ENCODE measurements at regions of chr18 and their contacts with region 1.

Region 1: DNA sequence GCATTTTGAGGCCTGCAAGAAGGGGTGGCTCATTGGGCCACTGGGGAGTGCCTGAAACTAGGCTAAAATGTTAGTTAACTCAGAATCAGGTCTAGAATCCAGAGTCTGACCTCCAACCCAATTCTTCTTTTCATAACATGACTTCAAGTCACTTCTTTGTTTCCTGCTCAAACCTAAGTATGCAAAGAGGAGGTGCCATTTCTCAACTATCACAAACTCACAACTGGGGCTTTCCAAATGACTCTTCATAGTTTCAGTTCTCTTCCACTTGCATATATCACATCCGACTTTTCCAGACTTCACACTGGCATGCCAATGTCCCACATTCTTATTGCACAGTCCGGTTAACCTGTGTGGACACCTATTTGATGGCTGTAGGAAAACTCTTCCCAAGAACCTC is 211.6 kb downstream of the TCF4 start:
- DNase-seq: no peak
- H3K4me3 ChIP-seq: no peak overlapping the region
- H3K27ac ChIP-seq: no peak overlapping the region
- H3K4me1 ChIP-seq: no peaks in the 10 kb centered on the region
- H3K27me3 ChIP-seq: no peaks in the 10 kb centered on the region
- CTCF ChIP-seq: no peak
- POLR2A ChIP-seq: no peak

Region 2: DNA sequence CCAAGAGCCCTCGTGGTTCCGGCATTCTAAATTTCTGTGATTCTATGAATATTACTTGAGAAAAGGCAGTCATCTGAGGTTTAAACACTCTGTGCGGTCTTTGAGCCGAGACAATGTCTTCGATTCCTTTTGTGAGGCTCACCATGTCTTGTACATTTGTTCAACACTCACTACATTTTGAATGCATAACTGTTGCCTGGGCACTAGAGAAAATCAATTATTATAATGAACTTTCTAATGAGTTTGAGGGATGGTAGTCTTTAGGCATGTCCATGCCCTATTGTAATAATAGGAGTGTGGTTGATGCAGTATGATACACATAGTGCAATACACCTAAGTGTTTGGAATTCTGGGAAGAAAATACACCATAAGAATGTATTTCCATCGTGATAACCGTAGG is 1855.3 kb before region 1 on chr18:
- intact Hi-C with region 1: no loop called
- DNase-seq: no peak
- H3K4me3 ChIP-seq: no peak overlapping the region
- H3K27ac ChIP-seq: no peak overlapping the region
- H3K4me1 ChIP-seq: no peaks in the 10 kb centered on the region
- H3K27me3 ChIP-seq: no peaks in the 10 kb centered on the region
- CTCF ChIP-seq: no peak
- POLR2A ChIP-seq: no peak

Region 3: DNA sequence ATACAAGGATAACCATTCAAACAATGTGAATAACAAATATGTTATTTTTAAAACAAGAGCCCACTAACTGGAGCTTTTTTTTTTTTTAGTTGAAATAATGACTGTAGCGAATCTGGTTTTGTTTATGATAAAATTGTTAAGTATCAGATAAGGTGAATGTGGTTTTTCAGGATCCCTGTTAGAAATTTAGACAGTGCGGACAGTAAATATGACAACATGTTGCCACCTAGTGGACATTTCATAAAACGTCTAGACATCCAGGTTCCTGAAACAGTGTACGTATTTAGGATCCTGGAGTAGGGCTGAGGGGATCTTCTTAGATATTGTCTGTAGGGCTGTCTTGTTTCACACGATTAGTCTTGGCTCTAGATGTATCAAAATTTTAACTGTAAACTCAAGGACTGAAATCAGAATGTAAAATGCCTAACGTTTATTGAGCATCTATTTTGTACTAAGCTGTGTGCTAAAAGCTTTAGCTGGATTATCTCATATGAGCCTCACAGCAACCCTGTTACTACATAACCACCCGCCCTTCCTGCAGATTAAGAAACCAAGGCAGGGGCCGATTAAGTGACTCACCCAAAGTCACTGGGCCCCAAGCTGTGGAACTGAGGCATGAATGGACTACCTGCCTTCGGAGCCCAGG is 393.2 kb before region 1 on chr18:
- intact Hi-C with region 1: no loop called
- DNase-seq: no peak
- H3K4me3 ChIP-seq: no peak overlapping the region
- H3K27ac ChIP-seq: no peak overlapping the region
- H3K4me1 ChIP-seq: no peaks in the 10 kb centered on the region
- H3K27me3 ChIP-seq: no peaks in the 10 kb centered on the region
- CTCF ChIP-seq: peak; percentile 26 to 75 (median 66)
- POLR2A ChIP-seq: no peak

Region 4: GRCh38 chr18:55250768-55251173 is 125.6 kb before region 1 on chr18:
- intact Hi-C with region 1: no loop called
- DNase-seq: no peak
- H3K4me3 ChIP-seq: no peak overlapping the region
- H3K27ac ChIP-seq: no peak overlapping the region
- H3K4me1 ChIP-seq: peaks cover 32% of the 10 kb centered on the region
- H3K27me3 ChIP-seq: no peaks in the 10 kb centered on the region
- CTCF ChIP-seq: no peak
- POLR2A ChIP-seq: no peak

Region 5: GRCh38 chr18:55354795-55355194 is 21.6 kb before region 1 on chr18:
- intact Hi-C with region 1: loop called (anchors 1 kb)
- DNase-seq: no peak
- H3K4me3 ChIP-seq: no peak overlapping the region
- H3K27ac ChIP-seq: no peak overlapping the region
- H3K4me1 ChIP-seq: peaks cover 19% of the 10 kb centered on the region
- H3K27me3 ChIP-seq: no peaks in the 10 kb centered on the region
- CTCF ChIP-seq: no peak
- POLR2A ChIP-seq: no peak

Measured in vagina (tissue), 2 donors.